ENCODE measurements at regions of chr2 and their contacts with region 1.

Region 1: DNA sequence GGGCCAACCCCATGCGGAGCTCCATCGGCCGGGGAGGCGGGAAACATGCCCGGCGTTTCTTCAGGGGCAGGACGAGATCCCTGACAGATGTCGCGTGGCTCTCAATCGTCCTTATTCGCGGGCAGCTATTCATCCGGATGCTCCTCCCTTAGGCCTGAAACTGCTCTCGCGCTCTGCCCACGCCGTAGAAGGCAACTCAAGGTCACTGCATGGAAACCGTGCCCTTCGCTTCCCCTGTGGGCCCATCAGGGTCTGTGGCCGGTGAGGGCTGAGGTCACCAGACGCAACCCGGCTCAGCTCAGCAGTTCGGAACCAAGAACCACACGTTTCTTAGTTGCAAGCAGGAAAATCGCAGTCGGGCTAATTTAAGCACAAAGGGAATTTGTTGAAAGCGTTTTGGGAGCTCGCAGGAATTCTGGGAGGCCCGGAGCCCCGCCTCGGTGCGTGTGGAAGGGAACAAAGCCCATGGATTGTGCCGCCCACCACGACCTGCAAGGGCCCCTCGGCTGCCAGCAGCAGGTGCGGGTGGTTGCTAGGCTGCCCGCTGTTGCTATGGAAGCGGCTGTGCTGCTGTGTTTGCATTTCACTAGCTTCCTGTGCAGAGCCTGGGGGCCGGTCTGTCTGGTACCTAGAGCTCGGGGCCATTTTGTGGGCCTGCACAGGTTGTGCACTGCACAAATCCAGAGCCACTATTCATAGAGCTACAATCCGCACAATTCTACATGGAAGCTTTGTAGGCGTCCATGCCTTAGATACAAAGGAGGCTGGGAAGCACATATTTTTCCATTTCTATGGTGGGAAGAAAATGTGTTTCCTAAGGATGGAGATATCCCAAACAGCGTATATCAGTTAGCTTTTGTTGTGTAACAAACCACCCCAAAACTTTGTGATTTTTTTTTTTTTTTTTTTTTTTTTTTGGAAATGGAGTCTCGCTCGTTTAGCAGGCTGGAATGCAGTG is 6.0 kb upstream of the ALLC start:
- DNase-seq: peak; percentile 6
- ATAC-seq: peak; percentile 19
- H3K4me3 ChIP-seq: peak overlapping the region; percentile 29; the same call in 1 of the 2 replicates
- H3K27ac ChIP-seq: no peak overlapping the region
- H3K4me1 ChIP-seq: peaks cover 6% of the 10 kb centered on the region; the same call in 1 of the 2 replicates
- H3K27me3 ChIP-seq: no peaks in the 10 kb centered on the region; the same call in 1 of the 2 replicates
- CTCF ChIP-seq: no peak

Region 2: DNA sequence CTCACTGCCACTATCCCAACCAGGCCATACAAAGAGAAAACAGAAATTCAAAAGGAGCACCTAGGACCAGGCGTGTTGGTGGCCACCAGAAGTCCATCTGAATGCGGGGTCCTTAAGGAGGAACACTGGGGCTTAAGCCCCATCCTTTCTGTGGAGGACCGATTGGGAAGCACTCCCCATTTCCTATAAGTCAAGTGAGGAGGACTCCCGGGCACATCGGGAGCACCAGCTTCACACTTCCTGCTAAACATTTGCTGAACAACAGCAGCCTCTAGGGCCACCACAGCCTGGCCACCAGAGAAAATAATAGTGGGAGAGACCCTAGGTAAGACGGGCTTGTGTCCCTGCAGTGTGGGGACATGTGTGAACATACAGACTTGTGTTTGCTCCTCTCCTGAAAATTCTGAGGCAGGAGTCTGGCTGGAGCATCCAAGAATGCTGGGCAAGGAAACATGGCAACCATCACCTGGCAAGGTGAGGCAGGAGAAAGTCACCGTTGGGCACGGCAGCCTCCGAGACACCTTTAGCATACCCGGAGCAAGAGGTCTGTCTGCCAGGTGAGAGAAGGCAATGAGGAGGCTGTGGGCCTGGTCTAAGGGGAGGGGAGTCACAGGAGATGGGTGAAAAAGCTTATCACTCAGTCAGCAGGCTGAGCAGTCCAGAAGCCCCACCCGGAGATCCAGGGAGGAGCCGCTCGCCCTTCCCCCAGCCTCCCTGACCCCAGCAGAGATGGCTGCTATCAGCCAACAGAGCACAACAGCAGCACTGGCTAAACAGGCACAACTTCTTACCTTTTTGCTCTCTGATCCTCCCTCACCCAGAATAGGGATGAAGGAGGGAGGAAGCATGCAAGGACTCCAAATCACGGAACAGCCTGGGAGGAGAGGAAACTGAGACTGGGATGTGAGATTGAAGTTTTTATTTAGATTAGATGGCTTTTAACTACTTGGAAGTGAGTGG is 556.7 kb before region 1 on chr2:
- CTCF ChIA-PET with region 1: no interaction called
- POLR2A ChIA-PET with region 1: no interaction called
- intact Hi-C with region 1: no loop called
- DNase-seq: no peak
- ATAC-seq: no peak
- H3K4me3 ChIP-seq: no peak overlapping the region
- H3K27ac ChIP-seq: no peak overlapping the region
- H3K4me1 ChIP-seq: no peaks in the 10 kb centered on the region
- H3K27me3 ChIP-seq: peaks cover 63% of the 10 kb centered on the region
- CTCF ChIP-seq: no peak

Region 3: DNA sequence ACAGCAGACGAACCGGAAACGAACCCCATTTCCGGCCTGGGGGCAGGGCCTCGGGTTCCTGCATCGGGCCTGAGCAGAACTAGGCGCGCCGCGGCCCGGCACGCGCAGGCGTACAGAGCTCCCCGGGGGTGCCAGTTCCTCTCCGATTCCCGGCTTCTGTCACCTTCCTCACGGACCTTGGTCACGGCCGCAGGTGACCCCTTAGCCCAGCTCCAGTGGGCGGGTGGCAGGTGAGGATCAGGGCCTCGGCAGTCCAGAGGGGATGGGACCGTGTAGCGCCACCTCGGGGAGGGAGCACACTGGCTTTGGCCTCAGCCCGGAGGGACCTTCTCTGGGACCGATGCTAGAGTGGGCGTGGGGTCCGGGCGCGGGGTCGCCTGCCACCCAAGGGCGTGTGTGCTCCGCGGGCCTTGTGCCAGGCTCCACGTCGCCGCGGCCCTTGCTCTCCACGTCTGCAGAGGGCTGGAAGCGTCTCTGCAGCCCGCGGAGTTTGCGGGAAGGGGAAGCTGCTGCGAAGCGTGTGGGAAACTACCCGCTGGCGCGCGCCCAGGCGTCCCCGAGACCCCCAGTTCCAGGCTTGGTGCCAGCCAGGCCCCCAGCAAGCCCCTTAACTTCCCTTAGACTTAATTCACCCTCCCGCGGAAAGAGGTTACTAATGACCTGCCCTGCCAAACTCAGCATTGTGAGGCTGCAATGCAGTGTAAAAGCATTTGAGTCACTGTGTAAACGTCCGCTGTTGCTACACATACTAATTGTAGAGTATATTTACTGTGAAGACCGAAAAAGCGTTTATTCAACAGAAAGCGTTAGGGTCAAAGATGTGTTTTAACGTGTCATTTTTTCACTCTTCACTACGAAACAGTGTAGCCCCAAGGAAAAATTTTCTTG is 272.1 kb before region 1 on chr2 and contains the start of gene TRAPPC12:
- CTCF ChIA-PET with region 1: no interaction called
- POLR2A ChIA-PET with region 1: no interaction called
- intact Hi-C with region 1: loop called (anchors 5 kb)
- DNase-seq: peak; percentile 89
- ATAC-seq: peak; percentile 71
- H3K4me3 ChIP-seq: peak within 1 kb of the TSS; percentile 92
- H3K27ac ChIP-seq: peak within 1 kb of the TSS; percentile 89
- H3K4me1 ChIP-seq: peaks cover 26% of the 10 kb centered on the region
- H3K27me3 ChIP-seq: no peaks in the 10 kb centered on the region
- CTCF ChIP-seq: peak; percentile 54
- total RNA-seq, gene TRAPPC12: 86.2 and 111 TPM in 2 replicates

Region 4: DNA sequence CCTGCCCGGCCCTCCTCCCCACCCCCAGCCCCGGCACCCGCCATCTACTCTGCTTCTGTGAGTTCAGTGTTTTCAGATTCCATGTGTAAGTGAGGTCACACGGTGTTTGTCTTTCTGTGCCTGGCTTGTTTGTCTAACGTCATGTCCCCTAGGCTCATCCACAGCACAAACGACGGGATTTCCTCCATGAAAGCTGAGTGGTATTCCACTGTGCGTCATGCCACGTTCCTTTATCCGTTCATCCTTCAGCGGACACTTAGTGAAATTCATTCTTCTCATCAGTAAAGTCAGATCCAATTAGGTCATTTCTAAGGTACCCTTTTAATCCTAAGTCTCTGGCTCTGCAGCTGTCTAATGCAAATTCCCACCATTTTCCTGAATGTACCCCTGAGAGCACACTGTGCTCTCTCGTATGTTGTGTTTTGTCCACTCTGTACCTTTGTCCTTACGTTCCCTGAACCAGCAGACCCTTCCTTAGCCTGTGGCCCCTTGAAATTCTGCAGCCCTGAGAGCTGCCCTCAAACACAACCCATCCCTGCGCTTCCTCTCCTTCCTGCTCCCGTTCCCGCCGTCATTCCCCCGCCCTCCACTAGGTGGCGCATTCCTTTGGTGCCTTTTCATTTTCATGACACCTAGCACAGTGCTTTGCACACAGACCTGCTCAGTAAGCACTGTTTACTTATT is 228.3 kb before region 1 on chr2:
- CTCF ChIA-PET with region 1: no interaction called
- POLR2A ChIA-PET with region 1: no interaction called
- intact Hi-C with region 1: loop called (anchors 1 kb)
- DNase-seq: peak; percentile 75
- ATAC-seq: peak; percentile 85
- H3K4me3 ChIP-seq: no peak overlapping the region
- H3K27ac ChIP-seq: no peak overlapping the region
- H3K4me1 ChIP-seq: no peaks in the 10 kb centered on the region
- H3K27me3 ChIP-seq: no peaks in the 10 kb centered on the region
- CTCF ChIP-seq: peak; percentile 99

Region 5: GRCh38 chr2:3476321-3476980 is 175.5 kb before region 1 on chr2:
- CTCF ChIA-PET with region 1: no interaction called
- POLR2A ChIA-PET with region 1: no interaction called
- intact Hi-C with region 1: loop called (anchors 5 kb)
- DNase-seq: no peak
- ATAC-seq: no peak
- H3K4me3 ChIP-seq: no peak overlapping the region
- H3K27ac ChIP-seq: no peak overlapping the region
- H3K4me1 ChIP-seq: no peaks in the 10 kb centered on the region
- H3K27me3 ChIP-seq: no peaks in the 10 kb centered on the region
- CTCF ChIP-seq: no peak

Region 6: DNA sequence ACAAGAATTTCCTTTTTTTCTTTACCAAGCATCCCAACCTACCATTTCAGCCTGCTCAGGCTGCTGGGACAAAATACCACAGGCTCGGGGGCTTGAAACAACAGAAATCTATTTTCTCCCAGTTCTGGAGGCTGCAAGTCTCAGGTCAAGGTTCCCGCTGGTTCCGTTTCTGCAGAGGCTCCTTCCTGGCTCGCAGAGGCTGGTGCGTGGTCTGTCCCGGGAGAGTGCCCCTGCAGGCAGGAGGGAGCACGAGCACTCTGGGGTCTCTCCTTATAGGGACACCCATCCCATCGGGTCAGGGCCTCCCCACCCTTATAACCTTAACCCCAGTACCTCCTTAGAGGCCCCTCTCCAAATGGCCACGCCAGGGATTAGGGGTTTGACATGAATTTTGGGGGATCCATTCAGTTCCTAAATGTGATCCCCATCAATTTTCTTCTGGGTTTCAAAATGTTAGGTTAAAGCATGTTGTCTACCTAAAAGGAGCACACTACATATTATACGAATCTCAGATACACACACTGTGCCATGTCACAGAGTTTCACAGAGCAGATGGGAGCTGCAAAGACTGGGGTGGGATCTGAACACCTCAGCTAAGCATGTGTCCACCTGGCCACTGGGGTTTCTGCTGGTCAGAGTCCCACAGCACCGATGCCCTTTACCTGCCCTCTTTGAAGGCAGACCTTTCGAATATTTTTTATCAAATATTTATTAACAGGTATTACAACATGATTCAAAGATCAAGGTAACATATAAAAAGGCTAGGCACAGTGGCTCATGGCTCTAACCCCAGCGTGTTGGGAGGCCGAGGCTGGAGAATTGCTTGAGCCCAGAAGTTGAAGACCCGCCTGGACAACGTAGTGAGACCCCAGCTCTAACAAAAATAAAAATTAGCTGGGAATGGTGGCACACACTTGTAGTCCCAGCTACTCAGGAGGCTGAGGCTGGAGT is 115.0 kb before region 1 on chr2:
- CTCF ChIA-PET with region 1: no interaction called
- POLR2A ChIA-PET with region 1: no interaction called
- intact Hi-C with region 1: loop called (anchors 5 kb)
- DNase-seq: peak; percentile 37
- ATAC-seq: peak; percentile 32
- H3K4me3 ChIP-seq: peak overlapping the region; percentile 54
- H3K27ac ChIP-seq: peak overlapping the region; percentile 95
- H3K4me1 ChIP-seq: peaks cover 26% of the 10 kb centered on the region
- H3K27me3 ChIP-seq: no peaks in the 10 kb centered on the region
- CTCF ChIP-seq: peak; percentile 57

Region 7: GRCh38 chr2:3575534-3576262 is 76.3 kb before region 1 on chr2:
- CTCF ChIA-PET with region 1: no interaction called
- POLR2A ChIA-PET with region 1: no interaction called
- intact Hi-C with region 1: loop called (anchors 2 kb)
- DNase-seq: no peak
- ATAC-seq: peak; percentile 21
- H3K4me3 ChIP-seq: peak overlapping the region; percentile 100
- H3K27ac ChIP-seq: peak overlapping the region; percentile 35
- H3K4me1 ChIP-seq: peaks cover 30% of the 10 kb centered on the region
- H3K27me3 ChIP-seq: no peaks in the 10 kb centered on the region
- CTCF ChIP-seq: no peak